ENCODE measurements at regions of chr15 and their contacts with region 1.

Region 1: DNA sequence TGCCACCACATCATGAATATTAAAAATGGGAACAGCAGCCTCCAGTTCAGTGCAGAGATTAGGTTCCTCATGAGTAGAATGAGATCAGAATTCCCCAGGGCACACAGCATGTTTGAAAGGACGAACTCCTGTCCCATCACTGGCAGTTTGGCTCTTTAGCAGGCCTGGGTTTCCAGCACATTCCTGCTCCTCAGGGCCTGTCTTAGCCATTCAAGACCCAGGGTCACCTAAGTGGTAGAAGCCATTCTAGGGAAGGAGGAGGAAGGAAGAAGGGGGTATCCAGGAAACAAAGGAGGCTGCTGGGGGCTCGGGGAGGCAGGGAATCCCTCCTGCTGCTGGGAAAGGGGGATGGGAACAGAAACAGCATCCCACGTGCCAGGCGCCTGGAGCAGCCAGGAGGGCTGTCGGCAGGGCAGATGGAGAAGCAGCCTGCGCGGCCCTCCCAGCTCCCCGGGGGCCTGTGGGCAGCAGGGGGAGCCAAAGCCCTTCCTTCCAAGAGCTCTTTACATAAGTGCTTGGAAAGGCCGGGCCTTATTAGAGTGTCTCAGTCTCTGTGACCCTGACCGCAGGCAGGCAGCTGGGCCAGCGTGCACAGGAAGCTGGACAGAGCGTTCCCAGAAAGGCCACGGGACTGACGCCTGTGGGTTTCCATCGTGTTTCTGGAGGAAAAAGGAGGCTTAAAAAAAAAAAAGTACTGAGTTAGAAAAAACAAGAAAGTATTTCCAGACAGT is 24.7 kb downstream of the LOXL1 start:
- DNase-seq: peak; percentile 87

Region 2: DNA sequence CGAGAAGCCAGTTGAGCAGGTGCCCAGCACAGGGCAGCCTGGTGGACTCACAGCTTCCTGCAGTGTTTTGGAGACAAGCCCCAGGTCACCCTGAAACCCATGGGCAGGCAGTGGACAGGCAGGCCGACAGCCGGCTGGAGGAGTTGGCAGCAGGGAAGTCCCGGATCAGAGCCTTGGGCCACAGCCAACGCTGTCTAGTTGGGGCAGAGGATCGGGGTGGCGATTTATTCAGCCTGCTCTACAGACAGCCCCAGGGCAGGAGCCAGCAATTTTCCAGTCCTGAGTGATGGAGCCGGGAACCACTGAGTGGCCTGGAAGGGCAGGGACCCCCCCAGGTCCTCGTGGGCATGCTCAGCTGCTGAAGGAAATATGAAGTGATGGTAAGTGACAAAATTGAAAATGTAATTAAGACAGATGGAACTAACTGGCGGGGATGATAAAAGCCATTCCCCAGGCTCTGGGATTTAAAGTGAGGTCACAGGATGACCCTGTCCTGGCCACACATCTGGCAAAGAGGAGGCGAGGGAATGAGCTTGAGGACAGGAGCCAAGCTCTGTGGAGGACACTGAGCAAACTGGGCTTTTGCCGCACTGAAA is 112.1 kb before region 1 on chr15:
- CTCF ChIA-PET with region 1: no interaction called
- POLR2A ChIA-PET with region 1: no interaction called
- DNase-seq: no peak

Region 3: GRCh38 chr15:73927476-73928240 is 23.3 kb before region 1 on chr15:
- CTCF ChIA-PET with region 1: interaction called, 9 read pairs
- POLR2A ChIA-PET with region 1: interaction called, 15 read pairs
- DNase-seq: peak; percentile 81

Region 4: GRCh38 chr15:73972984-73973682 is 22.1 kb after region 1 on chr15:
- CTCF ChIA-PET with region 1: interaction called, 17 read pairs
- POLR2A ChIA-PET with region 1: interaction called, 4 read pairs
- DNase-seq: peak; percentile 87